Mucosa of descending colon (tissue), 3 donors: ENCODE measurements at regions of chr10 and their contacts with region 1.

Region 1: DNA sequence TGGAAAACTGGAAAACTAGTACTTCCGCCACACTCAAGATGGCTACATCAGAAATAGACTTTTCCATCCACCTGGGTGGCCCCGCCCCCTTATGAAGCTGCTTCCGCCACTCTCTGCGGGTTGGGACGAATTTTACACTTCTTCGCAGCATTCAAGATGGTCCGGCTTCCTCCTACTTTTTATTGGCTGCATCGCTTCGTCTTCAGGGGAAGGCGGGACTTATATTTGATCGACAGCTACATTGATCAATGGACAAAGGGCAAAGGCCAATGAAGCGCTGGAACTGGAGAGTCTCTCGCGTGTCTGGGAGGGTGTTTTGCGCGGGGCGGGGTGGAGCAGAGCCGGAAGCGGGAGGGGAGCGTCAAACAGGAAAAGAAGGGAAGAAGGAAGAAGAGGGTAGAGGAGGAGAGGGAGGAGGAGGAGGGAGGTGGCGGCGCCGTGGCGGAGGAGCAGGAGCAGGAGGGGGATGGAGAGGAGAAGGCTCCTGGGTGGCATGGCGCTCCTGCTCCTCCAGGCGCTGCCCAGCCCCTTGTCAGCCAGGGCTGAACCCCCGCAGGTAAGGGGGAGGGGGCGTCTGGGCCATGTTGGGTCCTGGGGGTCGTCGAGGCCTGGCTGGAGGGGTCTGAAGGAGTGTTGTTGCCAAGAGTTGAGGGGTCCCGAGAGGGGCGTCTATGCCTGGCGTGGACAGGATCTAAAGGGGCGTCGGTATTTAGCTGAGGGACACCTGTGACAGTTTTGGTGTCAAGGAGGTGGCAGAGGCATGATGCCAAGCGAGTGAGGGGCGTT is at the start of gene WBP1L:
- DNase-seq: peak; percentile 96 to 99 (median 97)
- ATAC-seq: peak; percentile 98
- H3K4me3 ChIP-seq: peak within 1 kb of the TSS; percentile 89
- H3K4me1 ChIP-seq: no peaks in the 10 kb centered on the region
- CTCF ChIP-seq: no peak
- total RNA-seq, gene WBP1L: 38.9 to 61.3 (median 51.0) TPM

Region 2: GRCh38 chr10:102815790-102816549 is 72.2 kb after region 1 on chr10:
- intact Hi-C with region 1: loop called in 1 of 2 experiments (anchors 10 kb)
- DNase-seq: peak in 1 of 3 donors; percentile 42
- ATAC-seq: peak; percentile 39
- H3K4me3 ChIP-seq: no peak overlapping the region
- H3K4me1 ChIP-seq: peaks cover 10% of the 10 kb centered on the region
- CTCF ChIP-seq: no peak